Endothelial cell of umbilical vein (primary cell): ENCODE measurements at regions of chr6 and their contacts with region 1.

Region 1: DNA sequence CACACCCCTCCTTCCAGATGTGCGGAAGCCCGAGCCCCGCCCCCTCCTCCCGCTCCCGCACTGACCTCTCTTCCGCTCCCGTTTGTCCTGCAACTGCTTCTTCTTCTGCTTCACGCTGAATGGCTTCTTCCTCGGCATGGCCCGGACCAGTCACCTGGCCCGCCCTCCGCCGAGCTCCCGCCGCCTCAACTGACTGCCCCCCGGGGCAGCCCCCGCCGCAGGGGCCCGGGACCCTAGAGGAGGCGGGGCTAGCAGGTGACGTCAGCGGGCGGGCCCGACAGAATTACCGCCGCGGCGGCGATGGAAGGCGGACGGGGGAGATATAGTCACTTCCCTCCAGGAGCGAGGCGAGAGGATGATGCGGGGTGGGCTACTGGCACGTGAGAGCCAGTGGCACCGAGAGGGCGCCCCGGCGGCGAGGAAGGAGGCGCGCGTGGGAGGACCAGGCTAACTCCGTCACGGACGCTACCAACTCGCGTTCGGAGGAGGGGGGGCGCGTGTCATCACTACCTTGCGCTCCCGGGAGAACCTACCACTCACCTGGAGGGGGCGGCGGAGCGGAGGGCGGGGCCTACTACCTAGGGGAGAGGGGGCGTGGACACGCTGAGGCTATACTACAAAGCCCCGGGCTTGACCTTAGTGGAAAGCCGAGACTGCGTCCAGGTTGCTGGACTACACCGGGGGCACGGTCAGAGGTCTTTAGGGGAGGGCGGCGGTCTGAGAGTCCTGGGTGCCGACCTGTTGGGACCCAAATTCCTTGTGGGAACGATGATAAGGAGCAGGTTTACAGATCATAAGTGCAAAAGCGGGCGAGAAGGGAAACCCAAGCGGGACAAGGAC is at the start of gene GNL1:
- DNase-seq: peak; percentile 88
- H3K4me3 ChIP-seq: peak within 1 kb of the TSS; percentile 39 to 93 (median 52)
- H3K27ac ChIP-seq: peak within 1 kb of the TSS; percentile 84
- H3K4me1 ChIP-seq: peaks cover 19% of the 10 kb centered on the region
- H3K27me3 ChIP-seq: no peaks in the 10 kb centered on the region
- CTCF ChIP-seq: no peak
- POLR2A ChIP-seq: no peak
- total RNA-seq, gene GNL1: 87.3 and 103 TPM in 2 replicates

Region 2: DNA sequence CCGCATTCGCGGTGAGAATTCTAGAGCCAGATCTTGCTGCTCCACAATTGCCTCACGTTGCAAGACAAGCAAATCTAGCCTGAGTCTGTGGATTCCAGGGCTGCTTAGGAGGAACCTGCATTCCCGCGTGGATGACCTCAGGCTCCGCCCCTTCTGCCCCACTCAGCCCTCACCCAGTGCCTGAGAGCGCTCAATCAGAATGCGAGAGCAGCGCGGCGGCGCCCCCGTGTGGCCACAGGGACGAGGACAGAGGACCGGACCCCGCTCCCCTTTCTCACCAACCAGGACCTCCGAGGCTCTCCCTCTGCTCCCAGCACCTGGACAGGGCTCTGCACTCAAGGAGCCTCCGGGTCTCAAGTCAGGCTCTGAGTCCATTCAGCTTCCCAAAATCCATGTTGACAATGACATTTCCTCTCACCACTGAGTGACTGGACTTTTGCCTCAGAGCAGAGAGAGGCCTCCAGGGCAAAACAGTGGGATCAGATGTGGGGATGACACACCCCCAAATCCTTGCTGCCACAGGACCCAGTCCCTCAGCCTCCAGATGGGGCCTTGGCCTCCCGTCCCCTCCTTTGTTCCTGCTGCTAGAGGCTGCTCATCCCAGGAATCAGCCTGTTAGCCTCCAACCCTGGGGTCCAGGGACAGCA is 159.3 kb before region 1 on chr6:
- CTCF ChIA-PET with region 1: no interaction called
- POLR2A ChIA-PET with region 1: no interaction called
- dilution Hi-C with region 1: no loop called
- intact Hi-C with region 1: no loop called
- DNase-seq: peak; percentile 72
- H3K4me3 ChIP-seq: no peak overlapping the region
- H3K27ac ChIP-seq: no peak overlapping the region
- H3K4me1 ChIP-seq: no peaks in the 10 kb centered on the region
- H3K27me3 ChIP-seq: peaks cover 21 to 25% of the 10 kb centered on the region in 2 experiments
- CTCF ChIP-seq: peak; percentile 92 to 98
- POLR2A ChIP-seq: no peak

Region 3: GRCh38 chr6:30686908-30687658 is 130.8 kb after region 1 on chr6:
- CTCF ChIA-PET with region 1: no interaction called
- POLR2A ChIA-PET with region 1: no interaction called
- dilution Hi-C with region 1: no loop called
- intact Hi-C with region 1: loop called (anchors 1 kb)
- DNase-seq: peak; percentile 93
- H3K4me3 ChIP-seq: peak overlapping the region; percentile 76 to 92 (median 81)
- H3K27ac ChIP-seq: peak overlapping the region; percentile 93
- H3K4me1 ChIP-seq: peaks cover 33% of the 10 kb centered on the region
- H3K27me3 ChIP-seq: no peaks in the 10 kb centered on the region
- CTCF ChIP-seq: no peak
- POLR2A ChIP-seq: peak; percentile 96

Region 4: GRCh38 chr6:30793521-30794194 is 237.4 kb after region 1 on chr6:
- CTCF ChIA-PET with region 1: no interaction called
- POLR2A ChIA-PET with region 1: no interaction called
- dilution Hi-C with region 1: no loop called
- intact Hi-C with region 1: no loop called
- DNase-seq: peak; percentile 87
- H3K4me3 ChIP-seq: peak overlapping the region in 1 of 3 experiments; percentile 28
- H3K27ac ChIP-seq: peak overlapping the region; percentile 73
- H3K4me1 ChIP-seq: peaks cover 7% of the 10 kb centered on the region
- H3K27me3 ChIP-seq: no peaks in the 10 kb centered on the region
- CTCF ChIP-seq: no peak
- POLR2A ChIP-seq: no peak